ENCODE measurements at regions of chr9 and their contacts with region 1.

Region 1: DNA sequence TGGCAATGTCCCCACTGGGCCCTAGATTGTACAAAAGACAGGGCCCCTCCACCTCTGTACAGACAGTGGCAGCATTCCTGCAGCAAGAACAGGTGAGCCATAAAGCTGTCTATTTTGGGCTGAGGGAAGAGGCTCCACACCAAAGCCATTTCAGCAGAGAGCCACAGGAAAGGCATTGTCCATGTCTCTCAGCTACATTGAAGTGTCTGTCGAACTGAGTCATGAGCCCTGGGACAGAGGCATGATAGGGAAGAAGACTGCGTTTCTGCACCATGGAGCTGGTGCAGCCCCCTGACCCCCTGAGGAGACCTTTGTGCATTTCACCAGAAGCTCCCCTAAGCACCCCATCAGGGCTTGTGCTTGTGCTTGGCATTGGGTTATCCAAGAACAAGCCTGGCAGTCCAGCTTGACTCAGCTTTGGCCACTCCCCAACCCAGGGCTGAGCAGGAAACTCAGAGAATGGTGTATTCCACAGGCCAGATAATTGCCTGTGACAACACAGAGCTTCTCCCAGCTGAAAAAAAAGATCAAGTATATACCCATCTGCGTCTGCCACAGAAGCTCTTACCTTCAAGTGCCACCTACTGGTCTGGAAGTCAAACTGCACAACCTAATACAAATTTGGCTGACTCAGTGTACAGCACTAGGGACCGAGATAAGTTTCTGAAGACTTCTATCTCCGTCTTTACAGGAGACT is 5.9 kb upstream of the FRMD3 start:
- DNase-seq: peak; percentile 40
- ATAC-seq: peak; percentile 88

Region 2: DNA sequence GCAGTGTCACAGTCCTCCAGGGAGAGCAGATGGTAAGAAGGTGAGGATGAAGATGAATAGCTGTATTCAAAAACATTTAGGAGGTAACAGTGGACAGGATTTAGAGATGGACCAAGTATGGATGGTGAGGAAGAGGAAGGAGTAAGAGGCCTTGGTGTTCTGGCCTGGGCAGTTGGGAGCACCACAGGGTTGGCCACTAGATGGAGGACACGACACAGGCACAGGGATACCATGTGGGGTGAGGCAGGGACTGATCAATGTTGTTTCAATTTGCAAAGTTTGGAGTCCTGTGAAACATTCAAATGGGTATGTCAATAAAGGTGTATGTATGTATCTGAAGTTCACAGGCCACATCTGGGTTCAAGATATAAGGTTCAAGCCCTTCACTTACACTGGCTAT is 340.1 kb before region 1 on chr9:
- intact Hi-C with region 1: loop called (anchors 5 kb)
- DNase-seq: no peak
- ATAC-seq: no peak

Region 3: GRCh38 chr9:83219152-83219923 is 324.8 kb before region 1 on chr9:
- intact Hi-C with region 1: loop called (anchors 5 kb)
- DNase-seq: peak; percentile 87
- ATAC-seq: peak; percentile 98

Region 4: GRCh38 chr9:83334320-83334719 is 209.8 kb before region 1 on chr9:
- intact Hi-C with region 1: loop called (anchors 5 kb)
- DNase-seq: peak; percentile 88
- ATAC-seq: peak; percentile 95

Region 5: GRCh38 chr9:83722686-83723085 is 178.5 kb after region 1 on chr9:
- intact Hi-C with region 1: no loop called
- DNase-seq: no peak
- ATAC-seq: no peak